ENCODE measurements at regions of chr16 and their contacts with region 1.

Region 1: GRCh38 chr16:3880623-3881498 is at the start of gene CREBBP:
- DNase-seq: peak; percentile 70 to 80
- ATAC-seq: peak; percentile 81 to 87
- H3K4me3 ChIP-seq: peak within 1 kb of the TSS; percentile 85 to 95 (median 90)
- H3K27ac ChIP-seq: peak within 1 kb of the TSS; percentile 77 to 89 (median 86)
- H3K4me1 ChIP-seq: peaks cover 32 to 36% of the 10 kb centered on the region in 2 donors
- H3K27me3 ChIP-seq: no peaks in the 10 kb centered on the region
- CTCF ChIP-seq: peak in 2 of 5 experiments; percentile 7 to 13
- POLR2A ChIP-seq: peak; percentile 57 to 59
- total RNA-seq, gene CREBBP: 39.8 to 61.3 (median 53.5) TPM

Region 2: DNA sequence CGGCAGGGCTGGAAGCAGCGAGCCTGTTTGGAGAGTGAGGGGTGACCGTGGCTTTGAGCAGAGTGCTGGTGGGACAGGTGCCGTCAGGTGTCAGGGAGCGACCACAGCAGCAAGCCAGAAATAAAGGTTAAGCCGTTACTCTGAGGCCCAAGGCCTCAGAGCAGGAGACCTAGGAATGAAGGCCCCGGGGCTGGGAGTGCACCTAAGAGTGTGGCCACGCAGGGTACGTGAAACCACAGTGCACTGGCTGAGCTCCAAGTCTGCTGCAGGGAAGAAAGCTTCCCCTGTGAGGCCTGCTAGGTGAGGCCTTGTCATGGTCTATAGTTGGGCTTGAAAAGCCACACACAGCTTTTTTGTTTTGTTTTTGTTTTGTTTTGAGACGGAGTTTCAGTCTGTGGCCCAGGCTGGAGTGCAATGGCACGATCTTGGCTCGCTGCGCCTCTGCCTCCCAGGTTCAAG is 371.4 kb before region 1 on chr16:
- in situ Hi-C with region 1: loop called in 1 of 4 experiments (anchors 25 kb)
- intact Hi-C with region 1: no loop called
- DNase-seq: no peak
- ATAC-seq: no peak
- H3K4me3 ChIP-seq: no peak overlapping the region
- H3K27ac ChIP-seq: no peak overlapping the region
- H3K4me1 ChIP-seq: no peaks in the 10 kb centered on the region
- H3K27me3 ChIP-seq: no peaks in the 10 kb centered on the region
- CTCF ChIP-seq: no peak
- POLR2A ChIP-seq: no peak

Region 3: DNA sequence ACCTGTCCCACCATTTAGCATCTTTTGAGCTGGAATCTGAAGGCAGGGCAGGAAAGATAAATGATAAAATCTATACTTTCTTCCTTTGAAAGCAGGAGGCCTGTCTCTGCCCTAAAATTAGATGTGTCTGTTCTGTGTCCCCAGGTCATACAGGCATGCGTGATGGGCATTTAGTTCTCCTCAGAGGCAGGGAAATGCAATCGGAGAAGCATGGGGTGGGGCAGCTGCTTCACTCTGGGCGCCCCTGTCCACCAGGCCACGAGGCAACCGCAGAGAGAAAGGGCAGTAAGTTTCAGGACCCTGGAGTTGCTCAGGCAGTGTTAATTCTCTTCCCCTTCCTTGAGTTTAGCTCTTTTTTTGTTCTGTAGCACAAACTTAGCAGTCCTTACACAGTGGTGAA is 354.9 kb before region 1 on chr16:
- in situ Hi-C with region 1: loop called in 2 of 4 experiments (anchors 25 kb)
- intact Hi-C with region 1: loop called (anchors 5 kb)
- DNase-seq: no peak
- ATAC-seq: no peak
- H3K4me3 ChIP-seq: no peak overlapping the region
- H3K27ac ChIP-seq: peak overlapping the region in 1 of 4 donors; percentile 16
- H3K4me1 ChIP-seq: no peaks in the 10 kb centered on the region
- H3K27me3 ChIP-seq: no peaks in the 10 kb centered on the region
- CTCF ChIP-seq: no peak
- POLR2A ChIP-seq: no peak

Region 4: GRCh38 chr16:3536271-3536731 is 344.6 kb before region 1 on chr16:
- in situ Hi-C with region 1: loop called in 1 of 4 experiments (anchors 25 kb)
- intact Hi-C with region 1: no loop called
- DNase-seq: no peak
- ATAC-seq: no peak
- H3K4me3 ChIP-seq: no peak overlapping the region
- H3K27ac ChIP-seq: peak overlapping the region in 1 of 4 donors; percentile 45
- H3K4me1 ChIP-seq: peaks cover 25 to 35% of the 10 kb centered on the region in 2 donors
- H3K27me3 ChIP-seq: no peaks in the 10 kb centered on the region
- CTCF ChIP-seq: no peak
- POLR2A ChIP-seq: no peak

Region 5: DNA sequence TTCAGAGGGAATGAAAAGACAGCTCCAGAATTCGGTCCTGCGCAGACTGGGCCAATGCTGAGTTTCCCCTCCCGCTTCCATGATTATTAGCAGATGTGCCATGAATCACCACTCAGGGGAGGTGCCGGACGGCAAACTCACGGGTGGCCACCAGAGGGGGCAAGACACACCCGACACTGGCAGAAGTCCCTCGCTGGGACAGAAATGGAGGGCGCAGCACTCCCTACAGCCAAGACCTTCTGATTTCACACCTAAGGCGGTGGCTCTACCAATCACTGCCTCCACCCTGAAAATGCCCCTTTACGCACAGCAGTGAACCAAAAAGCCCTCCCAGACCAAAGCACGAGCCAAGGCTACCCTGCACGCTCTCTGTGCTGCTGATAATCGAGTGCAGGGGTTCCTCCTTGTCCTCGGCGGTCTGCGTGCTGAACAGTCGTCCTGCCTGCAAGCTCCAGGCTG is 190.4 kb before region 1 on chr16:
- in situ Hi-C with region 1: loop called (anchors 5 to 25 kb)
- intact Hi-C with region 1: loop called (anchors 1 kb)
- DNase-seq: peak; percentile 86 to 92
- ATAC-seq: peak; percentile 95 to 97
- H3K4me3 ChIP-seq: peak overlapping the region; percentile 39 to 68 (median 51)
- H3K27ac ChIP-seq: peak overlapping the region; percentile 65 to 84 (median 74)
- H3K4me1 ChIP-seq: peaks cover 23 to 27% of the 10 kb centered on the region in 2 donors
- H3K27me3 ChIP-seq: no peaks in the 10 kb centered on the region
- CTCF ChIP-seq: peak; percentile 88 to 97 (median 96)
- POLR2A ChIP-seq: no peak

Region 6: DNA sequence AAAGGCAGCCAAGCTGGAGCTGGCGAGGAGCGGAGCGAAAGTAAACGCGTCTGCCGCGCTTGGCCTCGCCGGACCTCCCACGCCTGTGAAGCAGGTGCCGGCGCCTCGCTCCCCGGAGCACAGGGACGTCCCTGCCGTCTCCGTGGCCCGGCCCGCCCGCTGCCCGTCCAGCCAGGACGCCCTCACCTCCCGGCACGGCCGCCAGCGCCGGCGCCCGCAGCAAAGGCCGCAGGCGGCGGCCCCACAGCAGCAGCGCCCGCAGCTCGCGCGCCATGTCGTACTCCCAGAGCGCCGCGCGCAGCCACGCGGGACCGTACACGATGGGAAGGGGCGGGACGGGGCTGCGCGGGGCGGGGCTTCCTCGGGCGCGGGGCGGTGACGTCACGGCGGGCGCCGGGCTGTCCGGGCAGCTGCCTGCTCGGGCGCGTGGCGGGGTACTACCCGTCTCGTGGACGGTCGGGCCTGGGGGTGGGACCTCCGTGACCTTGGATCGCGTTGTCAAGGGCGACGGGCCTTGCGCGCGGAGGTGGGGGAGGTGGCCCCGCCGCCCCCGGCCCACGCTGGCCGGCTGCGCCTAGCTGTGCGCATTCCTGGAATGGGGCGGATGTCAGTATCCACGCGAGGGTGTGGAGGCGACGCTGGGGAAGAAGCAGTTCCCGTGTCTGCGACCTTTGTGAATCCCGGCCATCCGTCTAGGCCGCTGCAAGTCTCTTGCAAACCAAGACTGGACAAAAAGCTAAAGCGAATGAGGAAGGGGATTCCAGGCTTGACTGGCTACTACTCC is 163.4 kb before region 1 on chr16 and contains the start of gene TRAP1:
- in situ Hi-C with region 1: no loop called
- intact Hi-C with region 1: loop called (anchors 1 kb)
- DNase-seq: peak; percentile 81 to 88
- ATAC-seq: peak; percentile 91 to 93
- H3K4me3 ChIP-seq: peak within 1 kb of the TSS; percentile 69 to 99 (median 78)
- H3K27ac ChIP-seq: peak within 1 kb of the TSS; percentile 88 to 96 (median 93)
- H3K4me1 ChIP-seq: peaks cover 12 to 17% of the 10 kb centered on the region in 2 donors
- H3K27me3 ChIP-seq: no peaks in the 10 kb centered on the region
- CTCF ChIP-seq: no peak
- POLR2A ChIP-seq: peak; percentile 87 to 91
- total RNA-seq, gene TRAP1: 103 to 140 (median 122) TPM

Region 7: GRCh38 chr16:3780570-3780969 is 100.3 kb before region 1 on chr16:
- in situ Hi-C with region 1: no loop called
- intact Hi-C with region 1: loop called (anchors 5 kb)
- DNase-seq: no peak
- ATAC-seq: no peak
- H3K4me3 ChIP-seq: no peak overlapping the region
- H3K27ac ChIP-seq: no peak overlapping the region
- H3K4me1 ChIP-seq: peaks cover 11 to 13% of the 10 kb centered on the region in 2 donors
- H3K27me3 ChIP-seq: no peaks in the 10 kb centered on the region
- CTCF ChIP-seq: no peak
- POLR2A ChIP-seq: no peak

Measured in gastrocnemius medialis (tissue), 4 donors.